Left ventricle myocardium inferior (tissue), 1 donor: ENCODE measurements at regions of chr12 and their contacts with region 1.

Region 1: DNA sequence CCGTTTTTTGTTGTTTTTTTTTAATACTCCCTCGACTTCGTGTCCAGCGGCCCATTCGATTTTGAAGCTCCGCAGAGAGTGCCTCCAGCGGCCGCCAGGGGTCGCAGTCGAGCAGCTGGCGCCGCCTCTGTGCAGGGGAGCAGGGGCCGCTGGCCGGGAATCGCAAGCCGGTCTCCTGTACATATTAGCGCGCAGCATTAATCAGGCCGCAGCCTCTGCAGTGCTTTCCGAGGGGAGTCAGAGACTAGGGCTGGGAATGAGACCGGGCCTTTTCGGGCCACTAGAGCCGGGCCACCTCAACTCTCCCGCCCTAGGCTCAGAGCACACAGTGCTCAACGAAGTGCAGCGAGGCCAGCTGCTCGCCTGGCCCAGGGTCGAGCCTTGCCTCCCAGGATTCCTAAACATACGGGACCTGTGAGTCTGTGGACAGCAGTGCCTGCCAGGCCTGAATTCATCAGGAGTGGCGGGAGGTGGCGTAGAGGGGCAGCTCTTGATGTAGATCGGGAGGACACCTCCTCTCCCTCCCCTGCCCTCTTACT is 81.8 kb downstream of the EMP1 start:
- DNase-seq: peak; percentile 71
- H3K4me3 ChIP-seq: peak overlapping the region; percentile 29
- H3K27ac ChIP-seq: peak overlapping the region; percentile 4
- H3K4me1 ChIP-seq: peaks cover 10% of the 10 kb centered on the region
- H3K27me3 ChIP-seq: peaks cover 76% of the 10 kb centered on the region
- CTCF ChIP-seq: peak; percentile 99

Region 2: DNA sequence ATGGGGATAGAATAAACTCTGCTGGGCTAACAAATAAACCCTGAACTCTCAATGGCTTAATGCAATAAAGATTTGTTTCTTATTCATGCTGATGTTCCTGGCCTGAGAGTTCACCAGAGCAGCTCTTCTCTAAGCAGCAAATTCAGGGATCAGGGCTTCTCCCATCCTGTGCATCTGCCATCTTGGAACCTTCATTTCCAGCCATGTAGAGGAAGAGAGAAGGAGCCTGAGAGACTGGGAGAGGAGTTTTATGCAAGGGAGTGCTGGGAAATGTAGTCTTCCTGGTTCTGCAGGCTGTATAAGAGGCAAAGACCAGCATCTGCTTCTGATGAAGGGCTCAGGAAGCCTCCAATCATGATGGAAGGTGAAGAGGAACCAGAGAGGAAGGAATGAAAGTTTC is 513.5 kb before region 1 on chr12:
- intact Hi-C with region 1: no loop called
- DNase-seq: no peak
- H3K4me3 ChIP-seq: no peak overlapping the region
- H3K27ac ChIP-seq: no peak overlapping the region
- H3K4me1 ChIP-seq: no peaks in the 10 kb centered on the region
- H3K27me3 ChIP-seq: no peaks in the 10 kb centered on the region
- CTCF ChIP-seq: no peak

Region 3: DNA sequence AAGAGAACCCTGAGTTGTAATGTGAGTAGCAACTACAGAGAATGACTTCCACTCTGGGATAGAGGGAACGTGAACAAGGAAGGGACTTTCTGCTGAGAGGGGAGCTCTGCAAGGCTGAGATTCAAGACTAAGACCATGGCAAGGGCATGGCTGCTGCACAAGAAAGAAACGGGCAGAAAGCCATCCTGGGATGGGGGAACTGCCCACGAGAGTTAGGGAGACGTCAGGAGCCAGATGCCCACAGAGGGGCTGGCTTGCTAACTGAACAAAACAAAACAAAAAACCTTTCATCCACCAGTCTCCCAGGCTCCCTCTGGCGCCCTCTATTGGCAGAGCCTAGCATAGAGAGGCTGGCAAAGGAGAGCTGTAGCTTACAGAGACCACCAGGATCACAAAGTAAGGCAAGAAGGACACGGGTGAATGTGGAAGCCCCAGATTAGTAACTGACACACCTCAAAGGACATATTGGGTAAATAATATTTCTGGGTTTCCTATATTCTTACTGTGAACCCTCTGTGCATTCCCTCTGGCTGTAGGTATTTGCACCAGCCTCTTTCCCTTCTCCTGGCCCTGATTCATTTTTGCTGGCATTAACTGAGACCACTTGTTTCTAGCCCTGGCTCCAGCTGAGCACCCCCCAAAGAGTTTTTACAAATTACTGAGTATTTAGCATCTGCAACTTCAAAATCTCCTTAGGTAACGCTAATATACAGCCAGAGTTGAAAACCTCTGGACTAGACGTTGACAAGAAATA is 256.5 kb after region 1 on chr12:
- intact Hi-C with region 1: loop called (anchors 10 kb)
- DNase-seq: peak; percentile 68
- H3K4me3 ChIP-seq: peak overlapping the region; percentile 42
- H3K27ac ChIP-seq: peak overlapping the region; percentile 38
- H3K4me1 ChIP-seq: peaks cover 3% of the 10 kb centered on the region
- H3K27me3 ChIP-seq: peaks cover 74% of the 10 kb centered on the region
- CTCF ChIP-seq: peak; percentile 90

Region 4: DNA sequence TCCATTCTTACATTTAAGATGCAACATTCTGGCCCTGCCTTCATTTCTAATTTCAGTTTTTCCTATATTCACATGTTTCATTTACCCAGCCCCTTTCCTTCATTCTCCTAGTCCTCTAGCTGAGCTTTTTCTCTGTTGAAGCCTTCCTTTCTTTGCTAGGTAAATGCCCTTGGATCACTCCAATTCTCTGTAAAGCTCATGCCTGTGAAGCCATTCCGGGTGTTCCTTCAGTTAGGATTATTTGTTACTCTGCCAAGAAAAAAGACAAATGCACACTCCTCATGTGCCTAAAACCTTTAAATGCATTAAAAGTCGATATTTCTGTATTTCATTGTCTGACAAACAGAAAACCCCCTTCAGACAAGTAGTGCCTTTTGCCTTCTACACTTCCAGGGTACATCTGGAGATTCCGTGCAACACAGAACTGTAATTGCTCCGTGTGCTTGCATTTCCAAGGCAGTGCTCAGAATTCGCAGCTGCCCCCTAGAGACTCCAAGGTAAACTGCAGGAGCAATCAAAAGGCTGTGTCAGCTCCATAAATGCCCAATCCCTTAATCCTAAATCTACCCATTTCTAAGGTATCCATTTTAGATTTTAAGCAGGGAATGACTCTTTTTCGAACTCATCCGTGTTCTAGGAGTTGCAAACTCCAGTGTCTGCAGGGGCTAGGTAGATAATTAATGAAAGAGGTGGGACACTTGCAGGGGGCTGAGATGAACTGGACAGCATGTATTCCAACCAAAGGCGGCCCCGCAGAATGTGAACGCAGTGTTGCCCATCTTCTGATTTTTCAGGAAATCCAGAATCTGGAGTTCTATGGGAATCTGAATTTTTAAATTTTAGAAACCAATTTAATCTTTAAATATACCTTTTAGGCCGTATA is 382.9 kb after region 1 on chr12:
- intact Hi-C with region 1: loop called (anchors 10 kb)
- DNase-seq: no peak
- H3K4me3 ChIP-seq: no peak overlapping the region
- H3K27ac ChIP-seq: no peak overlapping the region
- H3K4me1 ChIP-seq: no peaks in the 10 kb centered on the region
- H3K27me3 ChIP-seq: peaks cover 51% of the 10 kb centered on the region
- CTCF ChIP-seq: peak; percentile 89